ENCODE measurements at regions of chr5 and their contacts with region 1.

Region 1: DNA sequence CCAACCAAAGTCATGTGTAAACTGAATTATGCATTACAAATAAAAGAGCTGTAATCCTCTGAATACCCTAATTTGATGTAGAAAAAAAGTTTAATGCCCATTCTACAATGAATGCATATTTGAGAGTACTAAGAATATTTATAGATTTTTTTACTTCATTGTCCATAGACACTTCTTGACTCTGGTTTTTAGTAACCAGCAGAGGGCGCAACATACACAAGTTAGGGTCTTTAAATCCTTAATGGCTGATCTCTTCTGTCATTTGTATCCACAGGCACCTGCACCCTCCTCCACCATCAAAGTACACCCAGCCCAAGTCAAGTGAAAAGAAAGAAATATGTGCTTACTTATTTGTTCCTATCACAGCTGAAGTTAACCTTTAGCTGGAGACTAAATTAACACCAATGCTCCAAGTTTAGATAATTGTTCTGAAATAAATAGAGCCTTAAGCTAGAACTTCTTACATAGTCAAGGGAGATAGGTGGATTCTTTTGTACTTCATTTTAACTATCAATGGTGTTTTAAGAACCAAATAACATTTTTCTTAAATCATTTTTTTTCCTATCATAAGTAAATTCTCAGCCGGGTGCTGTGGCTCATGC is 524.2 kb upstream of the DAB2 start:
- DNase-seq: peak in 8 of 9 donors; percentile 30 to 74 (median 63)
- ATAC-seq: peak; percentile 91
- H3K4me3 ChIP-seq: no peak overlapping the region
- H3K4me3 Mint-ChIP-seq: no peak overlapping the region
- H3K27ac ChIP-seq: no peak overlapping the region
- H3K27ac Mint-ChIP-seq: no peak overlapping the region
- H3K4me1 ChIP-seq: no peaks in the 10 kb centered on the region
- H3K4me1 Mint-ChIP-seq: peaks cover 0 to 4% (median 0%) of the 10 kb centered on the region in 7 donors
- H3K27me3 ChIP-seq: no peaks in the 10 kb centered on the region
- H3K27me3 Mint-ChIP-seq: no peaks in the 10 kb centered on the region

Region 2: GRCh38 chr5:38680094-38680825 is 1268.7 kb before region 1 on chr5:
- CTCF ChIA-PET with region 1: no interaction called
- POLR2A ChIA-PET with region 1: no interaction called
- intact Hi-C with region 1: no loop called
- DNase-seq: no peak
- ATAC-seq: no peak
- H3K4me3 ChIP-seq: no peak overlapping the region
- H3K4me3 Mint-ChIP-seq: no peak overlapping the region
- H3K27ac ChIP-seq: no peak overlapping the region
- H3K27ac Mint-ChIP-seq: no peak overlapping the region
- H3K4me1 ChIP-seq: no peaks in the 10 kb centered on the region
- H3K4me1 Mint-ChIP-seq: no peaks in the 10 kb centered on the region
- H3K27me3 ChIP-seq: no peaks in the 10 kb centered on the region
- H3K27me3 Mint-ChIP-seq: peaks cover 4 to 15% (median 10%) of the 10 kb centered on the region in 5 donors

Region 3: DNA sequence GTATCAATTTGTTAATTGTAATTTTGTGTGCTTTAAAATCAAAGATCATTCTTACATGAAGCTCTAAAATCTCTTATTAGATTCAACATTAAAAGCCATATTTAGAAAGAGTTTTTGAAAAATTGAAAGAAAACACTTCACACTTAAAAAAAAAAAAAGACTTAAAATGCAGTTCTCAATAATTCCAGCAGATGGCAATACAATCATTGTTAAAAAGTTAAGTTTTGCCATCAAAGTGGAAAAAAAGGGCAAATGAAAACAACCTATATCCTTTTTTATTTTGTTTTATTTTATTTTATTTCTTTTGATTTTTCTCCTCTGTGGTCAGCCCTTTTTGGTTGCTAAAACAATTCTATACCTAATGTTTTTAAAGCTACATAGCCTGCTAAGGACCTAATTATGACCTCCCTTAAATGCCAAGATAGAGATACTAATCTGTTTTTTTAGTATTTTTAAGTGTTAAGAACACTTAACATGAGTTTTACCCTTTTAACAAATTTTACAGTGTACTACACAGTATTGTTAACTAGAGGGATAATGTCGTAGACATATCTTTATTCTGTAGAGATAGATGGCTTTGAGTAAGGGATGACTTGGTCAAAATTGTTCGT is 370.0 kb before region 1 on chr5:
- CTCF ChIA-PET with region 1: no interaction called
- POLR2A ChIA-PET with region 1: no interaction called
- intact Hi-C with region 1: loop called in 1 of 2 experiments (anchors 1 kb)
- DNase-seq: peak in 6 of 9 donors; percentile 2 to 31 (median 18)
- ATAC-seq: no peak
- H3K4me3 ChIP-seq: no peak overlapping the region
- H3K4me3 Mint-ChIP-seq: no peak overlapping the region
- H3K27ac ChIP-seq: no peak overlapping the region
- H3K27ac Mint-ChIP-seq: no peak overlapping the region
- H3K4me1 ChIP-seq: peaks cover 0 to 9% of the 10 kb centered on the region in 2 donors
- H3K4me1 Mint-ChIP-seq: peaks cover 6 to 17% (median 8%) of the 10 kb centered on the region in 7 donors
- H3K27me3 ChIP-seq: no peaks in the 10 kb centered on the region
- H3K27me3 Mint-ChIP-seq: peaks cover 0 to 23% (median 0%) of the 10 kb centered on the region in 5 donors

Region 4: GRCh38 chr5:40165794-40166728 is 217.1 kb after region 1 on chr5:
- CTCF ChIA-PET with region 1: no interaction called
- POLR2A ChIA-PET with region 1: no interaction called
- intact Hi-C with region 1: loop called in 1 of 2 experiments (anchors 10 kb)
- DNase-seq: peak in 1 of 9 donors; percentile 1
- ATAC-seq: no peak
- H3K4me3 ChIP-seq: no peak overlapping the region
- H3K4me3 Mint-ChIP-seq: no peak overlapping the region
- H3K27ac ChIP-seq: no peak overlapping the region
- H3K27ac Mint-ChIP-seq: no peak overlapping the region
- H3K4me1 ChIP-seq: no peaks in the 10 kb centered on the region
- H3K4me1 Mint-ChIP-seq: peaks cover 0 to 6% (median 0%) of the 10 kb centered on the region in 7 donors
- H3K27me3 ChIP-seq: no peaks in the 10 kb centered on the region
- H3K27me3 Mint-ChIP-seq: no peaks in the 10 kb centered on the region

Region 5: DNA sequence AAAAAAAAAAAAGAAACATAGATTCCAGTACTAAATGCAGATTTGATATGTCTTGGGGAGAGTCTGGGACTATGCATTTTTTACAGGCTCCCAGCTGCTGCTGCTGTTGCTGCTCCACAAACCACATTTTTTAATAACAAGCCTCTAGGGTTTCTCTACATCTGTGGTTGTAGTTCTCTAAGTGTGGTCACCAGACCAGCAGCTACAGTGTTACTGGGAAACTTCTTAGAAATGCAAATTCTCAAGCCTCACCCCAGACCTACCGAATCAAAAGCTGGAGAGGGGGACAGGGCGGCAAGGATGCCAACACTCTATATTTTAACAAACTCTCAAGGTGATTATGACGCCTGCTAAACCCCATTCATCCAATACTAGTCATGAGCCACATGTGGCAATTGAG is 437.3 kb after region 1 on chr5:
- CTCF ChIA-PET with region 1: no interaction called
- POLR2A ChIA-PET with region 1: no interaction called
- intact Hi-C with region 1: loop called in 1 of 2 experiments (anchors 5 kb)
- DNase-seq: no peak
- ATAC-seq: peak; percentile 62
- H3K4me3 ChIP-seq: no peak overlapping the region
- H3K4me3 Mint-ChIP-seq: peak overlapping the region in 3 of 10 donors; percentile 38 to 55 (median 48)
- H3K27ac ChIP-seq: peak overlapping the region; percentile 26
- H3K27ac Mint-ChIP-seq: peak overlapping the region in 4 of 9 donors; percentile 26 to 79 (median 54)
- H3K4me1 ChIP-seq: peaks cover 23 to 66% of the 10 kb centered on the region in 2 donors
- H3K4me1 Mint-ChIP-seq: peaks cover 37 to 86% (median 66%) of the 10 kb centered on the region in 7 donors
- H3K27me3 ChIP-seq: no peaks in the 10 kb centered on the region
- H3K27me3 Mint-ChIP-seq: no peaks in the 10 kb centered on the region

Region 6: DNA sequence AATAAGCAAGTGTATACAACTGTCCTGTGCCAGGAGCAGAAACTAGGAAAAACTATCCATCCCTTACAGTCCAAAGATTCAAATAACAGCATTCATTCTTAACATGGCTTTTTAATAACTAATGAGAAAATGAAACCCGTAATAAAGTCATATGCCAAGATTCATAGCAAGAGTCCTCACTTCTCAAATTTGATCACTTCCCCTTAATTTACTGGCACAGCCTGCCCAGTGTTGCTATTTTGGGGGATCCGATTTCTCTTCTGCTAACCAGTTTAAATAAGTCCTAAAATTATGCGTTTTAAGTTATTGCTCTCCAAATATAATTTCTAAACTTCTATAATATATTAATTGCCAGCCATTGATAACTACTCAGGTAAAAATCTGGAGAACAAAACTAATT is 553.8 kb after region 1 on chr5:
- CTCF ChIA-PET with region 1: no interaction called
- POLR2A ChIA-PET with region 1: no interaction called
- intact Hi-C with region 1: loop called (anchors 2 to 10 kb)
- DNase-seq: no peak
- ATAC-seq: no peak
- H3K4me3 ChIP-seq: no peak overlapping the region
- H3K4me3 Mint-ChIP-seq: no peak overlapping the region
- H3K27ac ChIP-seq: no peak overlapping the region
- H3K27ac Mint-ChIP-seq: no peak overlapping the region
- H3K4me1 ChIP-seq: no peaks in the 10 kb centered on the region
- H3K4me1 Mint-ChIP-seq: peaks cover 5 to 14% (median 6%) of the 10 kb centered on the region in 7 donors
- H3K27me3 ChIP-seq: no peaks in the 10 kb centered on the region
- H3K27me3 Mint-ChIP-seq: no peaks in the 10 kb centered on the region

Region 7: DNA sequence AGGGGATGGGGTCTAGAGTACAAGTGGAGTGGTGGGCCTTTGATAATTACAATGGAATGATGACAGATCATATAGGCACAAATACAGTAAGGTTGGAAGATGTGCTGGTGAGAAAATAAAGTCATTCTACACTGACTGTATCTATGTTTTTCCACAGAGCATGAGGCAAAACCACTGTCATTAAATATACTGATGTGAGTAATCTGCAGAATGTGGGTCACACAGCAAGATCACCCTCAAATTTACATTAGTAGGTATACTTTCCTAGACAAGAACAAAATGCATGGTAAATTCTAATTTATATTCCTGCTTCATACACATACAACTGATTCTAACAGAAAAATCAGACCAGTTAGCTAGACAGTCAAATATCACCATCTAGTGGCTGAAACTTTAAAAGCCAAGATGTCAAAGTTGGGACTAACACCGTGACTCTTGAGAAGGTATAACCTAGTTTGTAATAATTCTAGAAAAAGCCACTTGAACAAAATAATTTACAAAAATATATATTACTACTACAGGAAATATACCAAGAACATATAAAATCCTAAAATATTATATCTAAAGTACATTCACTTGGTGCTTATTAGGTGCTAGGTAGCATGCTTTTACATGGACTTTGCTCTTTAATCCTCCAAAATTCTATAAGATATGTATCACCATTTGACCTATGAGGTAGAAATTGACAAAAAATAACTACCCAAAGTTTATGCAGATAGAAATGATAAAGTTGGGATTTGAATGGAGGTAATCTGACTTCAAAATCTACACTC is 787.3 kb after region 1 on chr5:
- CTCF ChIA-PET with region 1: interaction called, 10 read pairs
- POLR2A ChIA-PET with region 1: no interaction called
- intact Hi-C with region 1: loop called (anchors 1 kb)
- DNase-seq: peak in 7 of 9 donors; percentile 26 to 60 (median 52)
- ATAC-seq: peak; percentile 81
- H3K4me3 ChIP-seq: no peak overlapping the region
- H3K4me3 Mint-ChIP-seq: no peak overlapping the region
- H3K27ac ChIP-seq: no peak overlapping the region
- H3K27ac Mint-ChIP-seq: no peak overlapping the region
- H3K4me1 ChIP-seq: no peaks in the 10 kb centered on the region
- H3K4me1 Mint-ChIP-seq: peaks cover 18 to 33% (median 24%) of the 10 kb centered on the region in 7 donors
- H3K27me3 ChIP-seq: no peaks in the 10 kb centered on the region
- H3K27me3 Mint-ChIP-seq: no peaks in the 10 kb centered on the region

Region 8: GRCh38 chr5:40879163-40879942 is 930.4 kb after region 1 on chr5:
- CTCF ChIA-PET with region 1: no interaction called
- POLR2A ChIA-PET with region 1: no interaction called
- intact Hi-C with region 1: loop called (anchors 1 kb)
- DNase-seq: peak in 5 of 9 donors; percentile 23 to 39 (median 29)
- ATAC-seq: peak; percentile 45
- H3K4me3 ChIP-seq: no peak overlapping the region
- H3K4me3 Mint-ChIP-seq: no peak overlapping the region
- H3K27ac ChIP-seq: no peak overlapping the region
- H3K27ac Mint-ChIP-seq: no peak overlapping the region
- H3K4me1 ChIP-seq: no peaks in the 10 kb centered on the region
- H3K4me1 Mint-ChIP-seq: peaks cover 0 to 5% (median 0%) of the 10 kb centered on the region in 7 donors
- H3K27me3 ChIP-seq: no peaks in the 10 kb centered on the region
- H3K27me3 Mint-ChIP-seq: peaks cover 0 to 9% (median 0%) of the 10 kb centered on the region in 5 donors

Measured in naive thymus-derived CD4-positive, alpha-beta T cell (primary cell).